ENCODE measurements at regions of chr10 and their contacts with region 1.

Region 1: GRCh38 chr10:86376852-86377796 is 10.5 kb upstream of the GRID1 start:
- DNase-seq: peak; percentile 54 to 92 (median 78)
- ATAC-seq: peak; percentile 93
- H3K4me3 ChIP-seq: peak overlapping the region; percentile 12 to 22
- H3K4me3 Mint-ChIP-seq: no peak overlapping the region
- H3K27ac ChIP-seq: no peak overlapping the region
- H3K27ac Mint-ChIP-seq: no peak overlapping the region
- H3K4me1 ChIP-seq: peaks cover 6% of the 10 kb centered on the region
- H3K4me1 Mint-ChIP-seq: peaks cover 3% of the 10 kb centered on the region
- H3K27me3 ChIP-seq: peaks cover 0 to 5% of the 10 kb centered on the region in 2 experiments
- H3K27me3 Mint-ChIP-seq: peaks cover 38% of the 10 kb centered on the region
- CTCF ChIP-seq: peak; percentile 100

Region 2: DNA sequence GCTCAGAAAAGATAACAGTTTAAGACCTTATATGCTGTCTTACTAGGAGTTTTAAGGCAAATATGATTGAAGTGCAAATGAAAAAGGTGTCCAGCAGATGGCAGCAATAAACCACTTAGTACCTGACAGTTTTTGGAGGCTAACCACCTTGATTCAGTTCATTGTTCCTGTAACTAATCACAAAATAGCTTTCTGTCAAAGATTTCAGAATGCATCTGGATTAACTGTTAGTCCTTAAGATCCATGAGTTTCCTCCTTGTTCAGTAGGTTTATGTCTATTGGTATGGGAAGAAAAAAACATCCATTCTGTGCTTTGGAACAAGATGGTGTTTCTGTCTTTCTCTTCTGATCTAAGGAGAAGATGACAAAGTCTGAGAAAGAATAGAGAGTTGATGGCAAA is 2002.1 kb before region 1 on chr10:
- CTCF ChIA-PET with region 1: no interaction called
- POLR2A ChIA-PET with region 1: no interaction called
- intact Hi-C with region 1: loop called in 1 of 2 experiments (anchors 5 kb)
- DNase-seq: peak in 5 of 9 experiments; percentile 24 to 79 (median 51)
- ATAC-seq: peak; percentile 74
- H3K4me3 ChIP-seq: no peak overlapping the region
- H3K4me3 Mint-ChIP-seq: no peak overlapping the region
- H3K27ac ChIP-seq: no peak overlapping the region
- H3K27ac Mint-ChIP-seq: peak overlapping the region; percentile 70
- H3K4me1 ChIP-seq: peaks cover 4% of the 10 kb centered on the region
- H3K4me1 Mint-ChIP-seq: peaks cover 60% of the 10 kb centered on the region
- H3K27me3 ChIP-seq: no peaks in the 10 kb centered on the region
- H3K27me3 Mint-ChIP-seq: no peaks in the 10 kb centered on the region
- CTCF ChIP-seq: peak; percentile 68

Region 3: DNA sequence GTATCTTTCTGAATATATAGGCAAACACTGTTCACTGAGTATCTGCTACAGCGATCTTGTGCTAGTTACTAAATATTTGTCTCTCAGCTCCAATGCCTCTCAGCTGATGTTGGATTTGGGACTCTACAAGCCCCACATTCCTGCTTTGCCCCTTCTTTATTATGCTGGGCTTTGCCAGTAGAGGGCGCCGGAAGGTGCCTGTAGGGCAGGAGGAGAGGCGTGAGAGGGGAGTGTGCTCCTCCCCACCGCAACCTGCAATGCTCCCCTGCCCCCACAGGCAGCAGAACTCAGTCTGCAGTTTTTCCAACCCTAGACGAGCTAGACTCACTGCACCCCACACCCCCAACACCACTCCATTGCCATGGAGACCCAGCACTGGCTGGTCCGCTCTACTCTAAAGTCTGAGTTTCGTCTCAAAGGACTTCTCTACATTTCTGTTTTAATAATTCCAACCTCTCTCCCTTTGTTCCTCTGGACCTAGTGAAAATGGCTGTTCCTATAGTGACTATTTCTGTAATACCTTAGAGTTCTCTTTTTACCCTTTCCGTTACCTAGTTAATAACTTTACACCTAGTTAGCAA is 1711.2 kb before region 1 on chr10:
- CTCF ChIA-PET with region 1: no interaction called
- POLR2A ChIA-PET with region 1: no interaction called
- intact Hi-C with region 1: loop called in 1 of 2 experiments (anchors 10 kb)
- DNase-seq: peak in 2 of 9 experiments; percentile 4 to 9
- ATAC-seq: no peak
- H3K4me3 ChIP-seq: no peak overlapping the region
- H3K4me3 Mint-ChIP-seq: no peak overlapping the region
- H3K27ac ChIP-seq: no peak overlapping the region
- H3K27ac Mint-ChIP-seq: no peak overlapping the region
- H3K4me1 ChIP-seq: no peaks in the 10 kb centered on the region
- H3K4me1 Mint-ChIP-seq: no peaks in the 10 kb centered on the region
- H3K27me3 ChIP-seq: no peaks in the 10 kb centered on the region
- H3K27me3 Mint-ChIP-seq: peaks cover 9% of the 10 kb centered on the region
- CTCF ChIP-seq: no peak

Region 4: GRCh38 chr10:84783386-84783785 is 1593.7 kb before region 1 on chr10:
- CTCF ChIA-PET with region 1: interaction called, 3 read pairs
- POLR2A ChIA-PET with region 1: no interaction called
- intact Hi-C with region 1: loop called in 1 of 2 experiments (anchors 10 kb)
- DNase-seq: peak in 1 of 9 experiments; percentile 15
- ATAC-seq: no peak
- H3K4me3 ChIP-seq: no peak overlapping the region
- H3K4me3 Mint-ChIP-seq: no peak overlapping the region
- H3K27ac ChIP-seq: no peak overlapping the region
- H3K27ac Mint-ChIP-seq: no peak overlapping the region
- H3K4me1 ChIP-seq: no peaks in the 10 kb centered on the region
- H3K4me1 Mint-ChIP-seq: no peaks in the 10 kb centered on the region
- H3K27me3 ChIP-seq: no peaks in the 10 kb centered on the region
- H3K27me3 Mint-ChIP-seq: peaks cover 5% of the 10 kb centered on the region
- CTCF ChIP-seq: no peak

Region 5: DNA sequence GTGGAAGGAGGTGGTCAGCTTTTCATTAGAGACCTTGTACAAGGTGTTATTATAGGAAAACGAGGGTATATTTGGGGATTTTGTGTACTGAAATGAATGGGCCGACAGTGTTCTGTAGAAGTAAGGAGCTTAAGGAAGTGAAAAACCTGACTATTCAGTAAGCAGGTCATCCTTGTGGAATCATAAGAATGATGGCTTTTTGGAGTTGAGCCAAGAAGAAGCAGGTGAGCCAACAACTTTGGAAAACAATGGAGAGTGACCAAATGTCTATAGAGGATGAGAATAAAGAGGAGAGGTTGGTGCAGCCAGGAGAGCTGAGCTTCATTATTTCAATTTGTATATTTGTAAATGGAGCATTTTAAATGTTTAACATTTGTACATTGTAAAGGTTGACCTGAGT is 1453.0 kb before region 1 on chr10:
- CTCF ChIA-PET with region 1: interaction called, 3 read pairs
- POLR2A ChIA-PET with region 1: no interaction called
- intact Hi-C with region 1: loop called (anchors 2 to 5 kb)
- DNase-seq: no peak
- ATAC-seq: no peak
- H3K4me3 ChIP-seq: no peak overlapping the region
- H3K4me3 Mint-ChIP-seq: no peak overlapping the region
- H3K27ac ChIP-seq: no peak overlapping the region
- H3K27ac Mint-ChIP-seq: no peak overlapping the region
- H3K4me1 ChIP-seq: no peaks in the 10 kb centered on the region
- H3K4me1 Mint-ChIP-seq: no peaks in the 10 kb centered on the region
- H3K27me3 ChIP-seq: no peaks in the 10 kb centered on the region
- H3K27me3 Mint-ChIP-seq: no peaks in the 10 kb centered on the region
- CTCF ChIP-seq: no peak

Region 6: DNA sequence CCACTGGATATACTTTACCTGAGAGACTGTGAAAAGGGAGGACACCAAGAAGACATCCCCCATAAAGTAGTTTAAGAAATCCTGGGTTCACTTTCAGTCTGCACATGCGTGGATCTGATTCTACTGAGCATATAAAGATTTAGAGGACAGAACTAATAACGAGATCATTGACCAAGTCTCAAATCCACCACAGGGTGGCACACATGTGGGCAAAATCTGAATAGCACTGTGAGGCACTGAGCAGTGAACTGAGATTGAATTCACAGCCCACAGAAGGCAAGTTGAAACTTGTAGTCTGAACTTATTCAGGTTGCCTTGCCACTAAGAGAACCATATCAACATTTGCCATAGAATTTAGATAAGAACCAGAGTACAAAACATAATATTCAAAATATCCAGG is 829.1 kb before region 1 on chr10:
- CTCF ChIA-PET with region 1: no interaction called
- POLR2A ChIA-PET with region 1: no interaction called
- intact Hi-C with region 1: loop called in 1 of 2 experiments (anchors 1 kb)
- DNase-seq: peak in 3 of 9 experiments; percentile 6 to 42 (median 29)
- ATAC-seq: no peak
- H3K4me3 ChIP-seq: no peak overlapping the region
- H3K4me3 Mint-ChIP-seq: no peak overlapping the region
- H3K27ac ChIP-seq: no peak overlapping the region
- H3K27ac Mint-ChIP-seq: no peak overlapping the region
- H3K4me1 ChIP-seq: no peaks in the 10 kb centered on the region
- H3K4me1 Mint-ChIP-seq: no peaks in the 10 kb centered on the region
- H3K27me3 ChIP-seq: no peaks in the 10 kb centered on the region
- H3K27me3 Mint-ChIP-seq: peaks cover 33% of the 10 kb centered on the region
- CTCF ChIP-seq: no peak

Region 7: GRCh38 chr10:86321568-86321967 is 55.6 kb before region 1 on chr10:
- CTCF ChIA-PET with region 1: no interaction called
- POLR2A ChIA-PET with region 1: no interaction called
- intact Hi-C with region 1: no loop called
- DNase-seq: no peak
- ATAC-seq: no peak
- H3K4me3 ChIP-seq: no peak overlapping the region
- H3K4me3 Mint-ChIP-seq: no peak overlapping the region
- H3K27ac ChIP-seq: no peak overlapping the region
- H3K27ac Mint-ChIP-seq: no peak overlapping the region
- H3K4me1 ChIP-seq: no peaks in the 10 kb centered on the region
- H3K4me1 Mint-ChIP-seq: no peaks in the 10 kb centered on the region
- H3K27me3 ChIP-seq: no peaks in the 10 kb centered on the region
- H3K27me3 Mint-ChIP-seq: peaks cover 19% of the 10 kb centered on the region
- CTCF ChIP-seq: no peak

Region 8: GRCh38 chr10:86387178-86387794 is 10.2 kb after region 1 on chr10:
- CTCF ChIA-PET with region 1: interaction called, 13 read pairs
- POLR2A ChIA-PET with region 1: no interaction called
- intact Hi-C with region 1: no loop called
- DNase-seq: peak in 1 of 9 experiments; percentile 43
- ATAC-seq: no peak
- H3K4me3 ChIP-seq: no peak overlapping the region
- H3K4me3 Mint-ChIP-seq: no peak overlapping the region
- H3K27ac ChIP-seq: no peak overlapping the region
- H3K27ac Mint-ChIP-seq: no peak overlapping the region
- H3K4me1 ChIP-seq: no peaks in the 10 kb centered on the region
- H3K4me1 Mint-ChIP-seq: peaks cover 11% of the 10 kb centered on the region
- H3K27me3 ChIP-seq: peaks cover 0 to 2% of the 10 kb centered on the region in 2 experiments
- H3K27me3 Mint-ChIP-seq: peaks cover 30% of the 10 kb centered on the region
- CTCF ChIP-seq: no peak